WTC11 (cell line): ENCODE measurements at regions of chr17 and their contacts with region 1.

Region 1: GRCh38 chr17:1516388-1517161 is at the start of gene INPP5K:
- DNase-seq: peak; percentile 93
- ATAC-seq: peak; percentile 93
- H3K4me3 Mint-ChIP-seq: peak within 1 kb of the TSS; percentile 88
- H3K27ac Mint-ChIP-seq: peak within 1 kb of the TSS; percentile 97
- H3K4me1 Mint-ChIP-seq: peaks cover 14% of the 10 kb centered on the region
- H3K27me3 Mint-ChIP-seq: no peaks in the 10 kb centered on the region
- CTCF ChIP-seq: no peak
- total RNA-seq, gene INPP5K: 17.1 to 26.8 TPM (median 18.5 TPM) in 3 replicates

Region 2: GRCh38 chr17:1260086-1260769 is 256.3 kb before region 1 on chr17:
- CTCF ChIA-PET with region 1: interaction called, 12 read pairs
- POLR2A ChIA-PET with region 1: no interaction called
- DNase-seq: no peak
- ATAC-seq: no peak; the same call in 1 of the 2 replicates
- H3K4me3 Mint-ChIP-seq: peak overlapping the region; percentile 86
- H3K27ac Mint-ChIP-seq: no peak overlapping the region
- H3K4me1 Mint-ChIP-seq: peaks cover 12% of the 10 kb centered on the region
- H3K27me3 Mint-ChIP-seq: peaks cover 41% of the 10 kb centered on the region
- CTCF ChIP-seq: no peak

Region 3: DNA sequence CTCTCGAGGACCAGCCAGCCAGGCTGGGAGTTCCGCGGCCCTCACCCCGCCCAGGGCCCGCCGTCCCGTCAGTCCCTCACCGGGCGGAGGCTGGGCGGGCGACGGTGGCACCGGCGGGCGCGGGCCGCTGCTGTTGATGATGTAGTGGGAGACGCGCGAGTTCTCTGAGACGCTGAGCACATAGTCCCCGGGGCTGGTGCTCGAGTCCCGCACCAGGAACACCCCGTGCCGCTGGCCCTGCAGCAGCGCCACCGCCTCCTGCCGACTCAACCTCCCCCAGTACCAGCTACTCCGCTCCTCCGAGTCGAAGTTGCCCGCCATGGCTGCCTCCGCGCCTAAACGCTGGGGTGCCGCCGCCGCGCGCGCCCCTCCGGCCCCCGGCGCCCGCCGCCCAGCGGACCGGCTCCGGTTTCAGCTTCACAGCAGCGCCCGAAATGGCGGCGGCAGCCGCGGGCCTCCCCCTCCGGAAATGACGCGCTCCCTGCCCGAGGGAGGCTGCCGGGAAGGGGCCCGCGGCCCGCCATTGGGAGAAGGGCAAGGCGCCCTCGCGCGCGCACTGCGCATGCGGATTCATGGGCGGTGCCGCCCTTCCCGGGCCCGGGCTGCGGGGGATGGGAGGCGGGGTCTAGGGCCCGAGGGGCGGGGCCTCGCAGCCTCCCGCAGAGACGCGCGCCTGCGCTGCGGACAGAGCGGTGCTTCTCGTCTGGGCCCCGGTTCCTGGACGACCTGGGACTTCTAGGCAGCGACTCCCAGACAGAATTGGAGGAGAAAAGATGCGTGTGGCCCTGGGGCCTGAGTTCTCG is 60.6 kb before region 1 on chr17 and contains the start of gene CRK:
- CTCF ChIA-PET with region 1: interaction called, 10 read pairs
- POLR2A ChIA-PET with region 1: no interaction called
- DNase-seq: peak; percentile 98
- ATAC-seq: peak; percentile 94
- H3K4me3 Mint-ChIP-seq: peak within 1 kb of the TSS; percentile 91
- H3K27ac Mint-ChIP-seq: peak within 1 kb of the TSS; percentile 91
- H3K4me1 Mint-ChIP-seq: peaks cover 24% of the 10 kb centered on the region
- H3K27me3 Mint-ChIP-seq: no peaks in the 10 kb centered on the region; the same call in 1 of the 2 replicates
- CTCF ChIP-seq: no peak
- total RNA-seq, gene CRK: 43.6 to 45.2 TPM (median 43.7 TPM) in 3 replicates

Region 4: GRCh38 chr17:1488030-1488863 is 28.3 kb before region 1 on chr17:
- CTCF ChIA-PET with region 1: interaction called, 25 read pairs
- POLR2A ChIA-PET with region 1: interaction called, 16 read pairs
- DNase-seq: peak; percentile 81
- ATAC-seq: peak; percentile 4
- H3K4me3 Mint-ChIP-seq: peak overlapping the region; percentile 82
- H3K27ac Mint-ChIP-seq: 0 out of 2 replicates have a peak overlapping the region, but pooled peaks have one; percentile 41
- H3K4me1 Mint-ChIP-seq: peaks cover 36% of the 10 kb centered on the region
- H3K27me3 Mint-ChIP-seq: peaks cover 11% of the 10 kb centered on the region
- CTCF ChIP-seq: no peak

Region 5: GRCh38 chr17:1532836-1533602 is 16.4 kb after region 1 on chr17:
- CTCF ChIA-PET with region 1: interaction called, 23 read pairs
- POLR2A ChIA-PET with region 1: interaction called, 3 read pairs
- DNase-seq: peak; percentile 75
- ATAC-seq: peak; percentile 97
- H3K4me3 Mint-ChIP-seq: no peak overlapping the region
- H3K27ac Mint-ChIP-seq: no peak overlapping the region
- H3K4me1 Mint-ChIP-seq: no peaks in the 10 kb centered on the region
- H3K27me3 Mint-ChIP-seq: no peaks in the 10 kb centered on the region
- CTCF ChIP-seq: peak; percentile 37; the same call in 1 of the 2 replicates

Region 6: DNA sequence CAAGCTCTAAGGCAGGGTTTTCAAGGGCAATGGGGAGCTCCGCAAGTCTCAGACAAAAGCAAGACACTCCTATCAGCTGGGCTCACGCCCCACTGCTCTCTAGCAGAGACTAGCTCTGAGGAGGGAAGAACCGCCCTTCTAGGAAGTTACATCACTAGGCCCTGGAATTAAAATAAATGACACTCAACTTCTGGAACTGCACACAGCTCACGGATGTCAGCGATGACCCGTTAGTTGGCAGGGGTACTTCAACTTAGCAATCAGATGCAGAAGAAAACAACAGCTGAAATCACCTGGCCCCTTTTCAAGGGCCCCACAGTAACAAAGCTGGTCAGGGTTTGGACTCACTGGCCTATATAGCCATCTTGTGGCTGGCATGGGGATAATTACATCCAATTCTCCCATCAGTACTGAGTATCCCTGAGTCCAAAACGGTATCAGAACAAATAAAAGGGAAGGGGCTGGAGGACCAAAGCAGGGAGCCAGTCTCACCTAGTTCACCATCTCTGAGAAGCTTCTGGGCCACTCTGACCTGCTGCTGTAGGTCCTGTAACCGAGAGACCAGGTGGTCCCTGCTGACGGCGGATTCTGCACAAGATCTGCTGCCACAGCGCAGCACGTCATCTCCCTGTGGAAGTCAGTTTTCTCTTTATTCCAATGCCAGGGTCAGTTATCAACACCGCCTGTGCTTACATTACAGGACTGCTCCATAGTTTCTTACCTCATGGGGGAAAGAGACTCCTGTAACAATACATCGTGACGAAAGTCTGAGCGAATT is 267.4 kb after region 1 on chr17:
- CTCF ChIA-PET with region 1: no interaction called
- POLR2A ChIA-PET with region 1: no interaction called
- DNase-seq: no peak
- ATAC-seq: peak; percentile 86
- H3K4me3 Mint-ChIP-seq: no peak overlapping the region
- H3K27ac Mint-ChIP-seq: peak overlapping the region; percentile 69
- H3K4me1 Mint-ChIP-seq: no peaks in the 10 kb centered on the region
- H3K27me3 Mint-ChIP-seq: no peaks in the 10 kb centered on the region
- CTCF ChIP-seq: 0 out of 2 replicates have a peak, but pooled peaks have one; percentile 15